ENCODE measurements at regions of chr6 and their contacts with region 1.

Region 1: GRCh38 chr6:136822376-136823127 is at the start of gene PEX7:
- DNase-seq: peak; percentile 94
- ATAC-seq: peak; percentile 95
- H3K4me3 Mint-ChIP-seq: peak within 1 kb of the TSS; percentile 82
- H3K27ac Mint-ChIP-seq: peak within 1 kb of the TSS; percentile 94
- H3K4me1 Mint-ChIP-seq: peaks cover 24% of the 10 kb centered on the region
- H3K27me3 Mint-ChIP-seq: no peaks in the 10 kb centered on the region
- total RNA-seq, gene PEX7: 3.6 to 4.9 TPM

Region 2: GRCh38 chr6:136249811-136250685 is 572.5 kb before region 1 on chr6 and contains the start of gene MTFR2:
- CTCF ChIA-PET with region 1: no interaction called
- POLR2A ChIA-PET with region 1: no interaction called
- intact Hi-C with region 1: loop called in 1 of 2 experiments (anchors 1 kb)
- DNase-seq: peak; percentile 95
- ATAC-seq: peak; percentile 94
- H3K4me3 Mint-ChIP-seq: peak within 1 kb of the TSS; percentile 98
- H3K27ac Mint-ChIP-seq: peak within 1 kb of the TSS; percentile 90
- H3K4me1 Mint-ChIP-seq: peaks cover 42% of the 10 kb centered on the region
- H3K27me3 Mint-ChIP-seq: no peaks in the 10 kb centered on the region
- total RNA-seq, gene MTFR2: 26.9 to 28.9 TPM

Region 3: GRCh38 chr6:136751522-136751956 is 71.0 kb before region 1 on chr6:
- CTCF ChIA-PET with region 1: no interaction called
- POLR2A ChIA-PET with region 1: interaction called, 3 read pairs
- intact Hi-C with region 1: loop called in 1 of 2 experiments (anchors 1 kb)
- DNase-seq: peak; percentile 46
- ATAC-seq: peak; percentile 72
- H3K4me3 Mint-ChIP-seq: peak overlapping the region; percentile 42
- H3K27ac Mint-ChIP-seq: peak overlapping the region; percentile 63
- H3K4me1 Mint-ChIP-seq: peaks cover 68% of the 10 kb centered on the region
- H3K27me3 Mint-ChIP-seq: no peaks in the 10 kb centered on the region

Region 4: GRCh38 chr6:136945711-136946121 is 123.2 kb after region 1 on chr6:
- CTCF ChIA-PET with region 1: no interaction called
- POLR2A ChIA-PET with region 1: no interaction called
- intact Hi-C with region 1: loop called in 1 of 2 experiments (anchors 1 kb)
- DNase-seq: peak; percentile 14
- ATAC-seq: peak; percentile 80
- H3K4me3 Mint-ChIP-seq: no peak overlapping the region
- H3K27ac Mint-ChIP-seq: no peak overlapping the region
- H3K4me1 Mint-ChIP-seq: peaks cover 3% of the 10 kb centered on the region
- H3K27me3 Mint-ChIP-seq: peaks cover 15% of the 10 kb centered on the region

Region 5: DNA sequence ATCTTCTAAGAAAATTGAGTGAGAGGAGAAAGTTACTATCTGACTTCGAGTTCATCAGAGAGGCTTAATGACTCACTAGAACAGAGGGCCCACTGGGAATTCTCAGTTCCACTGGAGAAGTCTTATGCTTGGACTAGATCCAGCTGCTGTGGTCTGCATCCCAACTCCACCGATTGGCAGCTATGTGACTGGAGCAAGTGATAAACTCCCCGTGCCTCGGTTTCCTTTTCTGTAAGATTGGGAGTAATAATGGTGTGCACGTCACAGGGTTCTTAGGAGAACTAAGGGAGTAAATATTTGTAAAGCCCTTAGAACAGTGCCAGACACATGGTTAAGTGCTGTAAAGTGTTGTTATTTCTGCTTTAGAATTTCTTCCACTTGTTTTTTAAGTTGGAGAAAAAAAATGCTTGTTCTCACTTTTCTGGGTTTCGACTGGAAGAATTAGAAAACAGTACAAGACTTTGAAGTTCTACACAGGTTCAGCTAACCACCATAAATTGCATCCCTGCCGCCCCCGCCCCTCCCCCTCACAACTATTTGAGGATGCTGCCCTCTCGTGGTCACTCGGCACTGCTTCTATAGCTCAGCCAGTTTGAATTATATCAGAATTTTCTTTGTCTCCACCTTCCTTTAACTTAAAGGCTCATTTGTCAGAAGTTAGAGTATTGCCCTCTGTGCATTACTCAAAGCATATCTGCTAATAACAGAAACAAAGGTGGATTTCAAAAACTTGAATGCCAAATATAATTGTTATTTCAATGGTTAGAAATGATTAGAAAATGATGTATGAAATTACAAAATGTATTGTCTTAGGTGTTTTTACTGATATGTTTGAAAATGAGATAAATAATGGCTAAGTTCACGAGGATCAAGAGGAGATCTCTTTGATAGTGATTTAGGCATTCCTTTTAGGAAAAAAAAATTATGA is 491.6 kb after region 1 on chr6:
- CTCF ChIA-PET with region 1: no interaction called
- POLR2A ChIA-PET with region 1: no interaction called
- intact Hi-C with region 1: loop called in 1 of 2 experiments (anchors 1 kb)
- DNase-seq: peak; percentile 87
- ATAC-seq: peak; percentile 70
- H3K4me3 Mint-ChIP-seq: no peak overlapping the region
- H3K27ac Mint-ChIP-seq: no peak overlapping the region
- H3K4me1 Mint-ChIP-seq: no peaks in the 10 kb centered on the region
- H3K27me3 Mint-ChIP-seq: peaks cover 8% of the 10 kb centered on the region

Measured in activated CD4-positive, alpha-beta T cell treated with anti-CD3 and anti-CD28 coated beads for 36 hours (primary cell).